CD4-positive, alpha-beta memory T cell (primary cell): ENCODE measurements at regions of chr2 and their contacts with region 1.

Region 1: DNA sequence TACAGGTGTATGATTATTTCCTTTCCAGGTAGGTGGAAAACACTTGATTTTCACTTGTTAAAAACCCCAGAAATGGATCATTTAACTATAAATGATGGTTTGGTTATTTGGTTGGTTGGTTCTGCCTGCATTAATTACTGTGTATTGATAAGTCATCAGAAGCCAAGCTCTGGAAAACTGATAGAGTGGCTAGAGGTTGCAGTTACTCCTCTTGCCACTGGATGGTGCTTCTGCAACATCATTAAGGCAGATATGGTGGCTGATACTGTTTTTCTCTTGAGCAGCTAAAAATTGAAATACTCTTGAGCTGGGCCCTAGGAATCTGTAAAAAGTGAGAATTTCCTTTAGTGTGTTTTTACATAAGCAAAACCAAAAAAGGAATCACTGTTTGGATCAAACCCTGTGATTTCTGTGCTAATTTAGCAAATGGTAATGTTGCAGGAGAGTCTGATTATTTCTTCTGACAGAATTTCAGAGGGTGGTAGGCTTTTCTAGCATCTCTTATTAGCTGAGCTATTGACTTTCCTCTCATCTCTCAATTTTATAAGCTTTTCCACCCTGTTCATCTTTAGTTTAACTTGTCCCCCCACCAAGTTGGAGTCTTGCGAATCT is 54.3 kb downstream of the RAB10 start:
- DNase-seq: peak in 4 of 5 donors; percentile 22 to 41 (median 26)
- H3K4me3 ChIP-seq: no peak overlapping the region
- H3K4me3 Mint-ChIP-seq: no peak overlapping the region
- H3K27ac ChIP-seq: no peak overlapping the region
- H3K27ac Mint-ChIP-seq: no peak overlapping the region
- H3K4me1 ChIP-seq: peaks cover 7% of the 10 kb centered on the region
- H3K4me1 Mint-ChIP-seq: peaks cover 37 to 71% (median 50%) of the 10 kb centered on the region in 4 donors
- H3K27me3 ChIP-seq: no peaks in the 10 kb centered on the region
- H3K27me3 Mint-ChIP-seq: no peaks in the 10 kb centered on the region

Region 2: DNA sequence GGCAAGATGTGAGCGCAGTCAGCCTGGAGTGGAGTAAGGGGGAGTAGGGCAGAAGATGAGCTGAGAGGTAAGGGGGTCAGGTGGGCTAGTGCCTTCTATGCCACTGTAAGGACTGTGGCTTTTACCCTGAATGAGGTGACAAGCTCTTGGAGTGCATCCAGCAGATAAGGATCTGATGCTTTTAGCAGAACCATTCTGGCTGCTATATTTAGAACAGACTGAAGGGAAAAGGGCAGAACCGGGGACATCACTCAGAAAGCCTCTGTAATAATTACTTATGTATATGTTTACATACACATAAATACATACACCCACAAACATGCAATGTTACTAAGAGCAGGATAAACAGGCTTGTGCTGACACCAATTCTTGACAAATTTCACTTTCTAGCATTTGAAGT is 539.5 kb before region 1 on chr2:
- CTCF ChIA-PET with region 1: no interaction called
- POLR2A ChIA-PET with region 1: no interaction called
- intact Hi-C with region 1: no loop called
- DNase-seq: no peak
- H3K4me3 ChIP-seq: no peak overlapping the region
- H3K4me3 Mint-ChIP-seq: peak overlapping the region in 1 of 8 donors; percentile 55
- H3K27ac ChIP-seq: no peak overlapping the region
- H3K27ac Mint-ChIP-seq: no peak overlapping the region
- H3K4me1 ChIP-seq: no peaks in the 10 kb centered on the region
- H3K4me1 Mint-ChIP-seq: no peaks in the 10 kb centered on the region
- H3K27me3 ChIP-seq: no peaks in the 10 kb centered on the region
- H3K27me3 Mint-ChIP-seq: no peaks in the 10 kb centered on the region

Region 3: GRCh38 chr2:26068602-26069298 is 19.4 kb before region 1 on chr2:
- CTCF ChIA-PET with region 1: interaction called, 11 read pairs
- POLR2A ChIA-PET with region 1: interaction called, 3 read pairs
- intact Hi-C with region 1: no loop called
- DNase-seq: peak; percentile 43 to 77 (median 47)
- H3K4me3 ChIP-seq: no peak overlapping the region
- H3K4me3 Mint-ChIP-seq: peak overlapping the region in 6 of 8 donors; percentile 1 to 75 (median 22)
- H3K27ac ChIP-seq: no peak overlapping the region
- H3K27ac Mint-ChIP-seq: peak overlapping the region; percentile 10 to 89 (median 50)
- H3K4me1 ChIP-seq: peaks cover 52% of the 10 kb centered on the region
- H3K4me1 Mint-ChIP-seq: peaks cover 39 to 58% (median 48%) of the 10 kb centered on the region in 4 donors
- H3K27me3 ChIP-seq: no peaks in the 10 kb centered on the region
- H3K27me3 Mint-ChIP-seq: no peaks in the 10 kb centered on the region

Region 4: GRCh38 chr2:26075963-26076605 is 12.1 kb before region 1 on chr2:
- CTCF ChIA-PET with region 1: interaction called, 25 read pairs
- POLR2A ChIA-PET with region 1: no interaction called
- intact Hi-C with region 1: no loop called
- DNase-seq: no peak
- H3K4me3 ChIP-seq: no peak overlapping the region
- H3K4me3 Mint-ChIP-seq: peak overlapping the region in 1 of 8 donors; percentile 26
- H3K27ac ChIP-seq: no peak overlapping the region
- H3K27ac Mint-ChIP-seq: peak overlapping the region in 1 of 7 donors; percentile 38
- H3K4me1 ChIP-seq: peaks cover 15% of the 10 kb centered on the region
- H3K4me1 Mint-ChIP-seq: peaks cover 33 to 50% (median 40%) of the 10 kb centered on the region in 4 donors
- H3K27me3 ChIP-seq: no peaks in the 10 kb centered on the region
- H3K27me3 Mint-ChIP-seq: no peaks in the 10 kb centered on the region

Region 5: DNA sequence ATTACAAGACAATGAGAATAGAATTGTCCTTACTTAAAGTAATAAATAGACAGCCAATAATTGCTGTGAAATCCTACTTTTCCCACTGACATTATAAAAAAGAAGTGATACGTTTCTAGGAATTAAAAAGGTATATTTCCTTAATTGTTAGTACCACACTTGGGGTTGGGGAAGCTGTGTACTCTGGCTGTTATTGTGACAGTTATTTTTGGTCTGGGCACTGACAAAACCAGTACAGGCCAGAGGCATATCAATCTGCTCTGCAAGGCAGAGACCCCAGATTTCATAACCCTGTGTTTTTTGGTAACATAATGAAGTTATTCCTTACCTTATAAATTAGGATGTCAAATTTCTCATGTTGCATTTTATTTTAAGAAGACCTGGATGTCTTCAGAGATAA is 12.2 kb after region 1 on chr2:
- CTCF ChIA-PET with region 1: interaction called, 15 read pairs
- POLR2A ChIA-PET with region 1: interaction called, 3 read pairs
- intact Hi-C with region 1: no loop called
- DNase-seq: no peak
- H3K4me3 ChIP-seq: no peak overlapping the region
- H3K4me3 Mint-ChIP-seq: no peak overlapping the region
- H3K27ac ChIP-seq: no peak overlapping the region
- H3K27ac Mint-ChIP-seq: no peak overlapping the region
- H3K4me1 ChIP-seq: no peaks in the 10 kb centered on the region
- H3K4me1 Mint-ChIP-seq: peaks cover 18 to 49% (median 36%) of the 10 kb centered on the region in 4 donors
- H3K27me3 ChIP-seq: no peaks in the 10 kb centered on the region
- H3K27me3 Mint-ChIP-seq: no peaks in the 10 kb centered on the region

Region 6: GRCh38 chr2:26144953-26145680 is 57.0 kb after region 1 on chr2:
- CTCF ChIA-PET with region 1: interaction called, 8 read pairs
- POLR2A ChIA-PET with region 1: no interaction called
- intact Hi-C with region 1: loop called (anchors 1 kb)
- DNase-seq: peak; percentile 47 to 58 (median 49)
- H3K4me3 ChIP-seq: no peak overlapping the region
- H3K4me3 Mint-ChIP-seq: no peak overlapping the region
- H3K27ac ChIP-seq: no peak overlapping the region
- H3K27ac Mint-ChIP-seq: no peak overlapping the region
- H3K4me1 ChIP-seq: no peaks in the 10 kb centered on the region
- H3K4me1 Mint-ChIP-seq: peaks cover 0 to 4% (median 2%) of the 10 kb centered on the region in 4 donors
- H3K27me3 ChIP-seq: peaks cover 6% of the 10 kb centered on the region
- H3K27me3 Mint-ChIP-seq: peaks cover 9 to 10% of the 10 kb centered on the region in 2 donors